Lower leg skin (tissue), 4 donors: ENCODE measurements at regions of chr2 and their contacts with region 1.

Region 1: DNA sequence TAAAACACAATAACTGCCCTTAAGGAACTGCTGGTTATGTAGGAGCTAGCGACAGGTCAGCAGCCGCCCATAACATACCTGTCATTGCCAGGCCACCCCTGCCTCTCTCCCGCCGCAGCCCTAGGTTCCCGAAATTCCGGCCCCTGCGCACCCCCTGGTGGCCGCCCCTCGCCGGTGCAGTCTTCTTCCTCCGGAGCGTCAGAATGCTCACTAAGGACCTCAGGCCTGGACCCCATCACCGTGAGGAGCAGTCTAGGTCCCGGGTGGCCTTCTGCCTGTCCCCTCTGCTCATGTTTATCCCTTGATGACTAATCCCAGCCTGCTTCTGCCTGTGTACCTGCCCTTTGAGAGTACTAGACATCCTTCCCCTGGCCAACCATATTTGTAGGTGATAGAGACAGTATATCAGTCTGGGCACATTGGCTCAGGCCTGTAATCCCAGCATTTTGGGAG is 115.7 kb upstream of the SLC1A4 start:
- DNase-seq: peak; percentile 75 to 98
- H3K4me3 ChIP-seq: no peak overlapping the region
- CTCF ChIP-seq: peak in 2 of 3 donors; percentile 65 to 91
- POLR2A ChIP-seq: no peak

Region 2: GRCh38 chr2:64523666-64524603 is 349.6 kb before region 1 on chr2 and contains the start of gene AFTPH:
- intact Hi-C with region 1: loop called (anchors 10 kb)
- DNase-seq: peak; percentile 98 to 100
- H3K4me3 ChIP-seq: peak within 1 kb of the TSS; percentile 87
- CTCF ChIP-seq: no peak
- POLR2A ChIP-seq: peak in 1 of 2 donors; percentile 72
- total RNA-seq, gene AFTPH: 46.4 to 53.8 (median 49.6) TPM

Region 3: DNA sequence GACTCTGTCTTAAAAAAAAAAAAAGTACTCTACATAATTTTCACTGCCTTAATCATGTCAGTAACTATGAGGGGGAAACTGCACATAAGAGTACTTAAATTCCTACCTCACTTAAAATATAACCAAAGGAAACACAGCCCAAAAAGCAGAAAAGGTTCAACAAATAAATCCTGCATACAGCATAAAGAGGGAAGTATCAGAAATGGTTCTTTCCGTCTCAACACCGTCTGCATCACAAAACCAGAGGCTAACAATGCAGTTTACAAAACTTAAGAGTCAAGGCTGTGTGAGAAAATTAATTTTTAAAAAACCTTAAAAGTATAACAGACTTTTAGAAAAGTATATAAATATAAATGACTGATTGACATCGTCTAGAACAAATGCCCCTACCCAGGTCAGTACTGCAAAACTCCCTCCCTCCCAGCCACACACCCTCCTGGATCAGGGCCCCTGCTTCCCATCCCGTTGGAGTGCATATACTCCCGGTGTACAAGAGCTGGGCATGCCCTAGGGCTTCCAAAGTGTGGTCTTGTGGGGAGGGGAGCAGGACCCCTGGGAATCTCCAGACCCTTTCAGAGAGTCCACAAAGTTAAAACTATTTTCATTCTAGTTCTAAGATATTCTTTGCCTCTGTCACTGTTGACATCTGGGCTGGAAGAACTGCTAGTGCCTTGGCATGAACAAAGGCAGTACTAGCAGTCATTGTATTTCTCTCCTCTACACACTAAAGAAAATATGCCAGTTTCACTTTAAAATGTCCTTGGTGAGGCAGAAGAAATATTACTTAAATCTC is 152.8 kb before region 1 on chr2:
- intact Hi-C with region 1: no loop called
- DNase-seq: no peak
- H3K4me3 ChIP-seq: no peak overlapping the region
- CTCF ChIP-seq: no peak
- POLR2A ChIP-seq: no peak

Region 4: DNA sequence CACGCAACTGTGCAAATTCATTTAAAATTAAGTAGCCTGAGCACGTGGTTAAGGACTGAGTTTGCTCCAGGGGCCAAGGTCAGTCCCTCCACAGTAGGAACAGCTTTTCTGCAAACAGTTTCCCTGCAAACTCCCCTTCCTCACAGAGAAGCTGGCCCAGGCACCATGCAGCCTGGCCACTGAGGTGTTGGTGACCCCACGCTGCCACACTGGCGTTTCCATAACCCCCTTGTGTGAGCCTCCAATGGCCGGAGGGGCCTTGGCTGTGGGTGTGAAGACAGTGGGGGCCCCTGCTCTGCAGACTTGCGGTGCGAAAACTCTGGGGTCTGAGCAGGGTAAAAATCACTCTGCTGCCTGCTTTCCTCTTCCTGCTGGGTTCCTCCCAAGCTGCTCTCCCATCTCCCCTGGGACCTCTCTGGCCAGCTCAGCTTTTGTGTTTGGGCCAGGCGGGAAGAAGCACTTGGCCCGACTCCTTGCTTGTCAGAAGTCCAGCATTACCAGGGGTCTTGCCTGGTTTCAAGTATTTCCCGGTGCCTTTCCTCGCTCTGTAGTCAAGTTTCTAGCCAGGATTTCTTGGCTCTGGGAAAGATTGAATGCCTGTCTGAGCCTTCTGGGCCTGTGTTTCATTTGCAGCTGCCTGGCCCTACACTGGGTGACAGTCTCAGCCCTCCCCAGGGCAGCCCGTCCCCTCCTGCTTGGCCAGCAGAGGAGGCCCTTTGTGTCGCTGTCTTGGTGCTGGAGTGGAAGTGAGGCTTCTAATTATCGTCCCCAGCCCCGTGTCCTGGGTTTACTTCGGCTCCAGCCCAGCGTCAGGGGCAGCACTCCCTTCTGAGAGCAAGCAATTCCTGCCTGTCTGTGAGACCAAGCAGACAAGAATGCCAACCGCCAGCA is 15.7 kb before region 1 on chr2:
- intact Hi-C with region 1: no loop called
- DNase-seq: no peak
- H3K4me3 ChIP-seq: no peak overlapping the region
- CTCF ChIP-seq: no peak
- POLR2A ChIP-seq: no peak